ENCODE measurements at regions of chr1 and their contacts with region 1.

Region 1: DNA sequence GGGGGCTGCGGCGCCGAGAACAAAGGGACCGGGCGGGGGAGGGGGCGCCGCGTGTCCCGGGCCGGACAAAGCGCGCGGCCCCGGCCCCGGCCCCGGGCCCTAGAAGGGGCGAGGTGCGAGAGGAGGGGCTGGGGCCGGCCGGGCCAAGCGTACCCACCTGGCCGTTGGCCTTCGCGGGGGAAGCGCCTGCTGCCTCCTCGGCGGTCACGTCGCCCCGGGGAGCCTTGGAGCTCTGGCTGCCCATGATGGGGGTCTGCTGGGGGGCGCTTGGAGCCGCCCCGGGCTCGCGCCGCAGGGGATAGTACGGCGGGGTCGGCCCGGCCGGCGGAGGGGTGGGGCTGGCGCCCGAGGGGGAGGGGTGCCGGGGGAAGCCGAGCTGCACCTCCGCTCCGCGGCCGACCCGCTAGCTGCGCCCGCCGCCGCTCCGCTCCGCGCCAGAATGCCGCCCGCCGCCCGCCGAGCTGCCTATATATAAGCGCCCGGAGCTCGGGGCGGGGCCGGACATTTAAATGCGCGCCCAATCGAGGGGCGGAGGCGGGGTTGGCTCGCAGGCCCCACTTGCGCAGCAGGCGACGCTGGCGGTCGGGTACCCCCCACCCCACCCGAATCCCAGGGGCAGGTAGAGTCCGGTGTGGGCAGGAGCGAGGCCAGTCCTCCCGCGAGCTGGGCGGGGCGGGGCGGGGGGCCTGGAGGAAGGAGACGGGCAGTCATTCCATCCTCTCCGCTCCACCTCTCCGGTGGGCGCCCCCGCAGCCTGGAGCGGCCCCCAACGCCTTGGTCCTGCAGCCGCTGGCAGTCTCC is at the start of gene MARCKSL1:
- DNase-seq: peak; percentile 79 to 93 (median 88)
- ATAC-seq: peak; percentile 62 to 66
- H3K4me3 Mint-ChIP-seq: peak within 1 kb of the TSS; percentile 80 to 93 (median 87)
- H3K27ac Mint-ChIP-seq: peak within 1 kb of the TSS; percentile 69 to 91 (median 88)
- H3K4me1 Mint-ChIP-seq: peaks cover 30 to 53% (median 36%) of the 10 kb centered on the region in 4 donors
- H3K27me3 Mint-ChIP-seq: no peaks in the 10 kb centered on the region
- polyA plus RNA-seq, gene MARCKSL1: 37.8 to 81.4 (median 72.7) TPM

Region 2: DNA sequence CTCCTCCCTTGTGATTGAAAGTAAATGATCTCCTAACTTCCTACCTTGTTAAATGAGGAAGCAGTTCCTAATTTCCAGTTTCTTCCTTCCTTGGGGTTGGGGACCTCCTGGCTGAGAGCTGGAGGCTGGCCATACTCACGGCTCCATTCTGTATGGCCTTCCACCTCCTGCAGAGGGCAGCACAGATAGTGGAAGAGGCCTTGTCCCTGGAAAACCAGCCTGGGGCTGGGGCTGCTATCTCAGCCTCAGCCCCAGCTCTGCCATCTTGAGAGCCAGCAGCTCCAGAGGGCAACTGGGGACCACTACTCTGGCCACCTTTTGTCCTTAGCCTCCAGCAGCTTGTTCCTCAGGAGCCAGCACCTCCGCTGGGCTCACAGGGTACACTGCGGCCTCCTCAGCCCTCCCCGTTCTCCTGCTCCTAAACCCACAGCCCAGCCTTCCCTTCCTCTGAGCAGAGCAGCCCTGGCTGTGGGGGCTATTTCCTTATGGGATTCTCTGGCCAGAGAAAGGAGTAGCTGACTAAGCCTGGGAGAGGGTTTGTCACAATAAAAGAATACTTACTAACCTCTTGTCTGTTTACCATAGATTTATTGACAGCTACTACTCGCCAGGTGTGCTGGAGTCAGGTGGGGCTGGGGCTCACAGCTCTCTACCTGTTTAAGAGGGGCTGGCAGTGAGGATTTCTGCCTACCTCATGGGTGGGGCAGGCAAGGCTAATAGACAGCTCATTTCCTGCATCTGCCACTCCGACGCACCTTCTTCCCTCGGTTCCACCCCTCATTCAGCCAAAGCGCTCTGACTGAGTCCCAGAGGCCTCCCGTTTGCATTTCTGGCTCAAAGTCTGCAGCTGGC is 120.1 kb before region 1 on chr1:
- POLR2A ChIA-PET with region 1: interaction called, 17 read pairs
- DNase-seq: peak; percentile 34 to 76 (median 46)
- ATAC-seq: peak; percentile 90 to 92
- H3K4me3 Mint-ChIP-seq: no peak overlapping the region
- H3K27ac Mint-ChIP-seq: peak overlapping the region in 6 of 10 donors; percentile 22 to 80 (median 55)
- H3K4me1 Mint-ChIP-seq: peaks cover 7 to 22% (median 16%) of the 10 kb centered on the region in 4 donors
- H3K27me3 Mint-ChIP-seq: no peaks in the 10 kb centered on the region

Region 3: DNA sequence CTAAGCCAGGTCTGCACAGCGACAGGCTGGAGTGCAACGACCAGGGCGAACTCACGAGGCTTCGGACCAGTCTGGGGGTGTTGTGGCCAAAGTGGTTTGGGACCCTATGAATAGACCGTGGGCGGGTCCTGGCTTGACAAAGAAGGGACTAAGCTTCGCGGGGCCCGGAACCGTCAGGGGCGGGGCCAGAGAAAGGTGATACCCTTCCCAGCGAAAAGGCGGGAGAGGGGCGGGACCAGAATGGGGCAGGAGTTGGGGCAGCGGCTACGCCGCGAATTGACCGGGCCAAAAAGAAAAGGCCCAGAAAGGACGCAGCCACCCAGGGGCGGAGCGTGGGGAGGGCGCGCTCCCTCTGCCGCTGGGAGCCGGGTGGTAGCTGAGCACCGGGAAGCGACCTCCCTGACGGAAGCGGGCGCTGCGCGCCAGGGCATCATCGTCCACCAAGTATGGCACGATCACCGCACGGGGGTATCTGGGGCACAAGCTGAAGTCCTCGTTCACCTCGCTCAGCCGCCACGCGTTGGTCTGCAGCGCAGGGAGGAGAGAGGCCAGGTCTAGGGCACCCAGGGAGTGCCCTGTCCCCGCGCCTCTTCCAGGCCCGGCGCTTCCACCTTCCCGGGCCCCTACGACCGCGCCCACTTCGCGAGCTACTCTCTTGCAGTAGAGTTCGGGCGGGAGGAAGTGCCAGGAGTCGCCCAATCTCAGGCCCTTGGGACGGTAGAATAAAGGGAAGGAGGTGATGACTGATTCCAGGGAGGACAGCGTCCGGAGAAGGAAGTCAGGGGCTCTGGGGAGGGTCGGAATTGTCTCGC is 95.6 kb before region 1 on chr1:
- POLR2A ChIA-PET with region 1: interaction called, 31 read pairs
- DNase-seq: peak; percentile 57 to 84 (median 64)
- ATAC-seq: peak; percentile 81
- H3K4me3 Mint-ChIP-seq: peak overlapping the region; percentile 88 to 93 (median 90)
- H3K27ac Mint-ChIP-seq: peak overlapping the region; percentile 69 to 91 (median 84)
- H3K4me1 Mint-ChIP-seq: peaks cover 7 to 21% (median 20%) of the 10 kb centered on the region in 4 donors
- H3K27me3 Mint-ChIP-seq: no peaks in the 10 kb centered on the region

Region 4: DNA sequence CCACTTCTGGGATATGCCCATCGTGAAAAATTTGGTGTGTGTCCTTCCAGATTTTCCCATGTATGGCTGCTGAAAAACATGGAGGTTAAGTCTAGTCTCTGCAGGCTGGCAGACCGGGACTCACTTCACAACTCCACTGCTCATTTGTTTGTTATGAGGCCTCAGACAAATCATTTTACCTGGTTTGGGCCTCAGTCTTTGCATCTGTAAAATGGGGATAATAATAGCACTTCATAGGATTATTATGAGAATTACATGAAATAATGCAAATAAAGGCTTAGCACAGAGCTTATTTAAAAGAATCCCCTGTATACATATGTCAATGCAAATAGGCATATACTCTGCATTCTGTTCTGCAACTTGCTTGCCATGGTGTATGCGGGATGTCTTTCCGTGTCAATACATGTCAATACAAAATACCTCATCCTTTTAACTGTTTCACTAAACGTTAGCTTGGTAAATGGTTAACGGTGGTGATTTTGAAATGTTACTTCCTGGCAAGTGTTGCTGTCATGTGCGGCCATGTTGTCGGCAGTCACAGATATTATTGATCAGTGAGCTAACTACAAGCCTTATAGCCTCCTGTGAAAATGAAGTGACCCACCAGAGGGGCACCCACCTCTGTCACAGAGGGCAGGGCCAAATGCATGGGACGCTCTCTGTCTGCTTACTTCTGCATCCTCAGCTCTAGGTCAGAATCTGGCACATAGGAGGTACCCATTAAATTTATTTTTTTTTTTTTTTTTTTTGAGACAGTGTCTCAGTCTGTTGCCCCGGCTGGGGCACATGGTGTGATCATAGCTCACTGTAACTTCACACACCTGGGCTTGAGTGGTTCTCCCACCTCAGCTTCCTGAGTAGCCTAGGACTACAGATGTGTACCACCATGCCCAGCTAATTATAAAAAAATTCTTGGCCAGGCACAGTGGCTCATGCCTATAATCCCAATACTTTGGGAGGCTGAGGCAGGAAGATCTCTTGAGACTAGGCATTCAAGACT is 80.6 kb before region 1 on chr1:
- POLR2A ChIA-PET with region 1: interaction called, 106 read pairs
- DNase-seq: peak in 2 of 10 donors; percentile 55 to 61
- ATAC-seq: peak; percentile 6 to 24
- H3K4me3 Mint-ChIP-seq: peak overlapping the region; percentile 79 to 100 (median 88)
- H3K27ac Mint-ChIP-seq: peak overlapping the region; percentile 86 to 99 (median 94)
- H3K4me1 Mint-ChIP-seq: peaks cover 30 to 80% (median 53%) of the 10 kb centered on the region in 4 donors
- H3K27me3 Mint-ChIP-seq: no peaks in the 10 kb centered on the region

Region 5: DNA sequence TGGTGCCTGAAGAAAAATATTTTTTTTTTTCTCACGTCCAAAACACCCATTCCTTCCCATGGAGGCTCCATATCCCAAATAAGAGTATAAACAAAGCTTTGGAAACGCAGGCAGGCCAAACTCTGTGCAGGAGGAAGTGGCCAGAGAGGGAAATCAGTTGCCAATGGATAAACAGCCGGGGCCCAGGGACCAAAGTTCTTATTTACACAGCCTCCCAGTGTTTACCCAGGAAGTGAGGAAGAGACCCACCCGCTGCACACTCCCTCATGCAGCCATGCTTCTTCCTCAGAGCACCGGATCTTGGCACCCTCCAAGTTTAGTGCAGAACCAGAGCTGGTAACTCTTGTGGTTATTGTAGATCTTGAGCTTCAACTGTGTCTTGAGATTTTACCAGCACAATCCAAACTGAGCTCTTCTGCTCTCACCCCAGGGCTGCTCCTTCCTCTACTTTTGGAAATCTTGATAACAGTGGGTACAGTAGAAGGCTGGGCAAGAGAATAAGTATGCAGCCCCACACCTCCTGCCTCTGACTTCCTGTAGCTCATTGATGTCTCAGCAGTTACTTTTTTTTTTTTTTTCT is 14.2 kb before region 1 on chr1:
- POLR2A ChIA-PET with region 1: interaction called, 44 read pairs
- DNase-seq: peak in 6 of 10 donors; percentile 16 to 55 (median 36)
- ATAC-seq: peak; percentile 90 to 91
- H3K4me3 Mint-ChIP-seq: peak overlapping the region; percentile 62 to 88 (median 72)
- H3K27ac Mint-ChIP-seq: peak overlapping the region; percentile 67 to 94 (median 91)
- H3K4me1 Mint-ChIP-seq: peaks cover 14 to 54% (median 36%) of the 10 kb centered on the region in 4 donors
- H3K27me3 Mint-ChIP-seq: no peaks in the 10 kb centered on the region

Region 6: DNA sequence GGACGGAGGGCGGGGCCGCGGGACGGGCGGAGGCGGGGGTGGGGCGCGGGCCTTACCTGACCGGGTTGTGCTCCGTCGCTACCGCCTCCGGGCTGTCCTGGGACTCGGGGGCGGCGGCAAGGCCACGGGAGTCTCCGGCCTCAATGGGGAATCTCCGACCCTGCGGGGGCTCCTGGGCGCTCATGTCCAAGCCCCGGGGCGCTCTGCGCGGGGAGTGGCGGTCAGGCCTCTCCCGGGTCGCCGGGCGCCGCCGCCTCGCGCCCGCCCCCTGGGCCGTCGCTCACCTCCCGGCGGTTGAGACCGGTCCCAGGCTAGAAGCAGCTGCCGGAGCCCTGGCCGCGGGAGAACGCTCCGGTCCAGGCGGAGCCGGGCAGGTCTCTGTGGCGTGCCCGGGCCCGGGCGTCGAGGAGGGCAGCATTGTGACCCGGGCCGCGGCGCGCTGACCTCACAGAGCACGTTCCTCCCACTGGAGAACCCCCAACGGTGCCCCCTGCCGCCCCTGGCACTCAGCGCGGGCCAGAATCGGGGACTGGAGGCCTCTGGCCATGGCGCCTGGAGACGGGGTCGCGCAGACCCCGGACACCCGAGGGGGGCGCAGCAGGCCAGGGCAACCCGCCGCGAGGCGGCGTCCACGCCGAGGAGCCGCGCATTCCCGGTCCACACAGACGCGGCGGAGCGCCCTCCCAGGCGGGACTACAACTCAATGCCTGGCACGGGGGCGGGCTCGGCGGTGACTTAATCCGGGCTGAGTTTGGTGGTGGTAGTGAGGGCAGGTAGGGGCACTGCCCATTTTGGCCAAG is 25.9 kb after region 1 on chr1:
- POLR2A ChIA-PET with region 1: interaction called, 16 read pairs
- DNase-seq: peak in 6 of 10 donors; percentile 18 to 32 (median 29)
- ATAC-seq: peak; percentile 58 to 62
- H3K4me3 Mint-ChIP-seq: peak overlapping the region in 8 of 10 donors; percentile 15 to 83 (median 58)
- H3K27ac Mint-ChIP-seq: peak overlapping the region in 2 of 10 donors; percentile 18 to 50
- H3K4me1 Mint-ChIP-seq: peaks cover 16 to 37% (median 25%) of the 10 kb centered on the region in 4 donors
- H3K27me3 Mint-ChIP-seq: peaks cover 0 to 3% (median 0%) of the 10 kb centered on the region in 5 donors

Region 7: GRCh38 chr1:32394141-32394889 is 58.3 kb after region 1 on chr1 and contains the start of gene BSDC1:
- POLR2A ChIA-PET with region 1: interaction called, 16 read pairs
- DNase-seq: peak; percentile 95 to 99 (median 98)
- ATAC-seq: peak; percentile 95 to 96
- H3K4me3 Mint-ChIP-seq: peak within 1 kb of the TSS; percentile 91 to 100 (median 100)
- H3K27ac Mint-ChIP-seq: peak within 1 kb of the TSS; percentile 98 to 100 (median 100)
- H3K4me1 Mint-ChIP-seq: peaks cover 15 to 32% (median 30%) of the 10 kb centered on the region in 4 donors
- H3K27me3 Mint-ChIP-seq: no peaks in the 10 kb centered on the region
- polyA plus RNA-seq, gene BSDC1: 29.5 to 39.6 (median 31.1) TPM

Measured in naive thymus-derived CD8-positive, alpha-beta T cell (primary cell).